ENCODE measurements at regions of chr2 and their contacts with region 1.

Region 1: DNA sequence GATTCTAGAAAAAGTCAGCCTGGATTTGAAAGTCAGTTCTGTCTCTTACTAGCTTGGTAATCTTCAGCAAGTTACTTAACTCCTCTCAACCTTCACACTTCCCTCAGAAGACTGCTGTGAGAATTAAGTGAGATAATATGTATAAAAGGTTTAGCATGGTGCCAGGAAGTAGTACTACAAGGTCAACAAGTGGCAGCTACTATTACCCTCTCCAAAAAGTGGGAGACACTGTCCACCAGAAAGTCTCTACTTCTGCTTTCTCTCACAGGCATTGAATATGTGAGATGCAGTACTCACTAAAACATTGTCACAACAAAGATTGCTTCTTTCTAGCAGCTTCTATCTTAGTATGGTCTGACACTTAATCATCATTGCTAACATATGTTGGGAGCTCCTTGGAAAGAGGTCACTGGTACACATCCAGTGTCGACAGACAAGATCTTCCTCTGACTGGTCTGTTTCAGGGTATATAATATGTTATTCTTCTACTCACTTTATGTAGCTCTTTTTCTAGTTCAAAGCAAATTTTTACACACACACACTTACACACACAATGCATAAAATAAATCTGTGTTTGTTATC is 47.9 kb downstream of the DOCK10 start:
- H3K4me3 Mint-ChIP-seq: no peak overlapping the region
- H3K27ac Mint-ChIP-seq: peak overlapping the region; percentile 68
- H3K4me1 Mint-ChIP-seq: peaks cover 92% of the 10 kb centered on the region
- H3K27me3 Mint-ChIP-seq: no peaks in the 10 kb centered on the region

Region 2: GRCh38 chr2:224894356-224894755 is 100.0 kb before region 1 on chr2:
- intact Hi-C with region 1: no loop called
- H3K4me3 Mint-ChIP-seq: peak overlapping the region; percentile 39
- H3K27ac Mint-ChIP-seq: peak overlapping the region; percentile 89
- H3K4me1 Mint-ChIP-seq: peaks cover 76% of the 10 kb centered on the region
- H3K27me3 Mint-ChIP-seq: no peaks in the 10 kb centered on the region

Region 3: DNA sequence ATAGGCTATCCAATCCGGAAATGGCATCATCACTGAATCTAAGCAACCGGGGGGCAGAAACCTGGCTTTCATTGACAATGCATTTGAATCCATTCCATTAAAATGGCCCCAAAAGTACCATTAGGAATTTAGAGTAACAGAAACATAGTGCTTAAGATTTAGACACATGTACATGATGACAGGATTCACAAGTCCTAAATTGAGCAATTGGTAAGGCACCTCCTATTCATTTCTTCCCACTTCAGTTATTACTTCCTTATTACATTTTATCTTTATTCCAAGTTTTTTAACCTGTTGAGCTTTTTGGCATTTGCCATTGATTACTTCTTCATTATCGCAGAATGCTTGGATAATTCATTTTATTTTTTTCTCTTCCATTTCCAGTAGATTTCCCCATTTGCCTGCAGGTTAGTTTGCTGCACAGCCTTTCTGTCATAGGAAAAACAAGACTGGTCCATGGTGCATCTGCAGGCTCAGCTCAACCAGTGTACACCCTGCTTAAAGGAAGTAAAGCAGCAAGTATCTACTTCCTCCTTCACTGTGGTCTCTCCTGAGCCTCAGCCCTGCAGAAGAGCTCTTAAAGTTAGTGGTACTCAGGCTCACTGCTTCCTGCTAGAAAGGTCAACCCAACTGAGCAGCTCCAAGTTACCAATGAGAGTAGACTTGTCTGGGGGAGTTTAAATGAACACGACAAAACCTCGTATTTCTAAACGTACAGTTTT is 41.2 kb before region 1 on chr2:
- intact Hi-C with region 1: loop called (anchors 5 kb)
- H3K4me3 Mint-ChIP-seq: peak overlapping the region; percentile 6
- H3K27ac Mint-ChIP-seq: peak overlapping the region; percentile 74
- H3K4me1 Mint-ChIP-seq: peaks cover 79% of the 10 kb centered on the region
- H3K27me3 Mint-ChIP-seq: no peaks in the 10 kb centered on the region

Region 4: GRCh38 chr2:224969633-224970260 is 24.6 kb before region 1 on chr2:
- intact Hi-C with region 1: no loop called
- H3K4me3 Mint-ChIP-seq: no peak overlapping the region
- H3K27ac Mint-ChIP-seq: no peak overlapping the region
- H3K4me1 Mint-ChIP-seq: peaks cover 39% of the 10 kb centered on the region
- H3K27me3 Mint-ChIP-seq: no peaks in the 10 kb centered on the region

Region 5: GRCh38 chr2:225030203-225030602 is 35.9 kb after region 1 on chr2:
- intact Hi-C with region 1: no loop called
- H3K4me3 Mint-ChIP-seq: no peak overlapping the region
- H3K27ac Mint-ChIP-seq: no peak overlapping the region
- H3K4me1 Mint-ChIP-seq: peaks cover 72% of the 10 kb centered on the region
- H3K27me3 Mint-ChIP-seq: no peaks in the 10 kb centered on the region